Caco-2 (cell line): ENCODE measurements at regions of chr14 and their contacts with region 1.

Region 1: DNA sequence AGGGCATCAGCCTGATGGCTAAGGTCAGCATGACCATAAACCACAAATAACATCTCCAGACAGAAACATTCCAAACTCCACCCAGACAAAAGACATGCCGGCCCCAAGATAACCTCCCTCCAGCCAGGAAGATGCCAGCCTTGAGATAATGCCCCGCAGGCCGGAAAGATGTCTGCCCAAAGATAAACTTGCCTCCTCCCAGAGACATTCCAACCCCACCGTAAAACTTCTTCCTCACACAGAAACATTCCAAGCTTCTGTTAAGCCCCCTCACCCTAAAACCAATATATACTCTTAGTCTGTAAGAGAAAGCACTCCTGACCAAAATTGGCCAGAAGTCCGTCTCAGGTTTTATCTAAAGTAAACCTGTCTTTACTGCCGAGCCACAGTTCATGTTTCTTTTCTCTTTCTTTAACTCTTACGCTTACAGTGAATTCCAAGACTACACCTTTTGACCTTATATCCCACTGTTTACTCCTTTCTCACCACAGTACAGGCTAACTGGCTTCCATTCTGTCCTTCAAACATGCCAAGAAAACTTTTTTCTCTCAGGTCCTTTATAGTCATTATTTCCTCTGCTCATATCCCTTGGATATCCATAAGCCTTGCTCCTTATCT is 308.7 kb downstream of the KCNH5 start:
- DNase-seq: peak; percentile 82 to 91
- H3K4me3 ChIP-seq: no peak overlapping the region
- H3K4me3 Mint-ChIP-seq: peak overlapping the region; percentile 1
- H3K27ac Mint-ChIP-seq: peak overlapping the region; percentile 48
- H3K4me1 ChIP-seq: peaks cover 19% of the 10 kb centered on the region
- H3K4me1 Mint-ChIP-seq: peaks cover 26% of the 10 kb centered on the region
- H3K27me3 ChIP-seq: no peaks in the 10 kb centered on the region
- H3K27me3 Mint-ChIP-seq: no peaks in the 10 kb centered on the region
- CTCF ChIP-seq: no peak

Region 2: DNA sequence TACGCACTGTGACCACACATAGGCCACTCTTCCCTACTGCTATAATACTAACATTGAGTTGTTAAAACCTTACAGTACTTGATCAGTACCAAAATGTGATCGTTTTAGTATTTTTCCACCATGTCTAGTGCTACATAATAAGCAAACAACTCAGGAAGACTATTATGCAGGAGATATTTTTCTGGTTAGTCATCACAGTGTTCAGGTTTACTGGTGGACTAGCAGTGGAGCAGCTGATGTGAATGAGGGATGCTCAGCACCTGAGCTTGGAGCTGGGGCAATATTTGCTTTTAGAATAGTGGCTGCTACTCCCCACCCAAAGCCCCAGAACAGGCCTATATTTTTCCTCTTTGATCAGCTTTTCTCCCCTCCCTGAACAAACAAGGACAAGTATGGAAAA is 204.3 kb before region 1 on chr14:
- CTCF ChIA-PET with region 1: no interaction called
- POLR2A ChIA-PET with region 1: no interaction called
- intact Hi-C with region 1: loop called (anchors 2 kb)
- DNase-seq: peak; percentile 32 to 42
- H3K4me3 ChIP-seq: no peak overlapping the region
- H3K4me3 Mint-ChIP-seq: no peak overlapping the region
- H3K27ac Mint-ChIP-seq: no peak overlapping the region
- H3K4me1 ChIP-seq: no peaks in the 10 kb centered on the region
- H3K4me1 Mint-ChIP-seq: peaks cover 15% of the 10 kb centered on the region
- H3K27me3 ChIP-seq: no peaks in the 10 kb centered on the region
- H3K27me3 Mint-ChIP-seq: no peaks in the 10 kb centered on the region
- CTCF ChIP-seq: no peak

Region 3: GRCh38 chr14:62667421-62667921 is 69.1 kb before region 1 on chr14:
- CTCF ChIA-PET with region 1: no interaction called
- POLR2A ChIA-PET with region 1: no interaction called
- intact Hi-C with region 1: loop called (anchors 1 kb)
- DNase-seq: no peak
- H3K4me3 ChIP-seq: no peak overlapping the region
- H3K4me3 Mint-ChIP-seq: no peak overlapping the region
- H3K27ac Mint-ChIP-seq: no peak overlapping the region
- H3K4me1 ChIP-seq: peaks cover 20% of the 10 kb centered on the region
- H3K4me1 Mint-ChIP-seq: peaks cover 24% of the 10 kb centered on the region
- H3K27me3 ChIP-seq: no peaks in the 10 kb centered on the region
- H3K27me3 Mint-ChIP-seq: no peaks in the 10 kb centered on the region
- CTCF ChIP-seq: no peak